Left cardiac atrium (tissue), 4 donors: ENCODE measurements at regions of chr4 and their contacts with region 1.

Region 1: GRCh38 chr4:81884986-81885385 is 413.3 kb upstream of the RASGEF1B start:
- DNase-seq: no peak
- ATAC-seq: no peak

Region 2: GRCh38 chr4:81631958-81632441 is 253.0 kb before region 1 on chr4:
- intact Hi-C with region 1: no loop called
- DNase-seq: no peak
- ATAC-seq: peak; percentile 41 to 90

Region 3: GRCh38 chr4:81870275-81870674 is 14.7 kb before region 1 on chr4:
- intact Hi-C with region 1: loop called in 1 of 2 experiments (anchors 1 kb)
- DNase-seq: no peak
- ATAC-seq: no peak

Region 4: DNA sequence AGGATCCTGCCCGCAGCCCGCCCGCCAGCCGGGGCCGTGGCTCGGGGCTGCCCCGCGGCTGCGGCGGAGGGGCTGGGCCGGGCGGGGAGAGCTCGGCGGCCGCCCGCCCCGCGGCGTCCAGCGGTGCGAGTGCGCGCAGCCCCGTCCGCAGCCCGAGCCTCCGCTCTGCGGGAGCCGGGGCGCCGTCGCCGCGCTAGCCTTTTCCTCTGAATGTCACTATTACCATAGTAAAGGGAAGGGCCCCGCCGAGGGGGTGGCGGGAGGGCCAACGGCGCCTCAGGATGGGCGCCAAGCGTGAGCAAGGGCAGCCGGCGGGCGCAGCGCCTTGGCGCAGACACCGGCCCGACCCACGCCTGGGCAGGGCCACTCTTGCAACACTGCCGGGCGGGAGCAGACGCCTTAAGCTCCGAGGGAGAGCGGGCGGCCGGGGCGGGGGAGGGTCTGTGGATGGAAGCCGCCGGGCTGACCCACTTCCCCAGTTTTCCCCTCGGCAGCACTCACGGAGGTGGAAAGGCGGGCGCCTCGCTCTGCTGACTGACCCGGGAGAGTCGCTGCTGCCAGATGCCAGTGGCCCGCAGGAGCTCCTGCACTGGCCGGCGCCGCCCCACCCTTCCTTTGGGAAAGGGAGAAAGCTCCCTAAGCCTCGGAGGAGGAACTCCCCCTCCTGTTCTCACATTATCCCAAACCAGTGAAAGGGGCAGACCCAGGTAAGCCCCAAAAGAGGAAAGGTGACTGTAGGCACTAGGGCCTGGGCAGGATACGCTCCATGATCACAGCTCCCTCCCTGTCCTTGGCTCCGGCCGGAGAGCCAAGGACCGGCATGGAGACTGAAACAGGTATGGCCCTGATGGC is 159.4 kb after region 1 on chr4:
- intact Hi-C with region 1: no loop called
- DNase-seq: peak; percentile 76
- ATAC-seq: peak; percentile 94 to 97